ENCODE measurements at regions of chr17 and their contacts with region 1.

Region 1: GRCh38 chr17:74972107-74972972 is at the start of gene HID1:
- DNase-seq: peak; percentile 60 to 79 (median 74)
- ATAC-seq: peak; percentile 93
- H3K4me3 ChIP-seq: peak within 1 kb of the TSS; percentile 58
- H3K4me3 Mint-ChIP-seq: peak within 1 kb of the TSS; percentile 80 to 98 (median 87)
- H3K27ac ChIP-seq: peak within 1 kb of the TSS; percentile 51
- H3K27ac Mint-ChIP-seq: peak within 1 kb of the TSS in 8 of 9 donors; percentile 56 to 86 (median 80)
- H3K4me1 ChIP-seq: peaks cover 4 to 9% of the 10 kb centered on the region in 2 donors
- H3K4me1 Mint-ChIP-seq: peaks cover 5 to 18% (median 7%) of the 10 kb centered on the region in 7 donors
- H3K27me3 ChIP-seq: no peaks in the 10 kb centered on the region
- H3K27me3 Mint-ChIP-seq: peaks cover 0 to 55% (median 7%) of the 10 kb centered on the region in 5 donors
- total RNA-seq, gene HID1: 0.60 to 25.2 (median 14.8) TPM

Region 2: DNA sequence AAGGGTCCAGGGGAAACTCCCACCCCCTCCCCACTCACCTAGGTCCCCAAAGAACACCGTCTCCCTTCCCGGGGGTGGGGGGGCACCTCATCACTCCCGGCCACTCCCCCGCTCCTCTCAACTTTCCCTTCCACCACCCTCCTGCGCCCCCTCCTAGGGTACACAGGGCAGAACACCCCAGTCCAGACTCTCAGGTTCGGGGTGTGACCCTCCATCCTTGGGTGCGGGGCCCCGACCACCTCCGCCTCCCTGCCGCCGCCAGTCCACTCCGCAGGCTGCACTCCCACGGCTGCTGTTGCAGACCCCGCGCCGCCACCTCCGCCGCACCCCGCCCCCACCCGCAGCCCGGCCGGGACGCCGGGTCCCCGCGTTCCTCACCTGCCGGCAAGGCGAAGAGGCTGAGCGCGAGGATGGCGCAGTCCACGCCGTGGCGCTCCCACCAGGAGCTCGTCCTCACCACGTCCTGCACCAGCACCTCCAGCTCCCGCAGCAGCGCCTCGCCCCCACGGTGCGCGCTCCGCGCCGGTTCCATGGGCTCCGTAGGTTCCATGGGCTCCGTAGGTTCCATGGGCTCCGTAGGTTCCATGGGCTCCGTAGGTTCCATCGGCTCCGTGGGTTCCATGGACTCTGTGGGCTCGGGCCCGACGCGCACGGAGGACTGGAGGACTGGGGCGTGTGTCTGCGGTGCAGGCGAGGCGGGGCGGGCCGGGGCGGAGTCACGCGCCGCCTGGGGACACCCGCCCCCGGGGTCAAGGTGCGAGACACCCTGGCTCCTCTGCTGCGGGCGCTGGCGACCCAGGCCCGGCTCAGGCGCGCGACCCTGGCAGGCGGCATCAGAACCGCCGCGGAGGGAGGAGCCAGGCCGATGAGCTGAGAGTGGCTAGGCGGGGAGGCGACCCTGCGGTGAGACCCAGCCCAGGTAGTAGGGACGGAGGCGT is 79.1 kb before region 1 on chr17 and contains the start of gene FADS6:
- CTCF ChIA-PET with region 1: no interaction called
- POLR2A ChIA-PET with region 1: no interaction called
- intact Hi-C with region 1: no loop called
- DNase-seq: peak in 2 of 9 donors; percentile 10
- ATAC-seq: peak; percentile 57
- H3K4me3 ChIP-seq: no peak within 1 kb of the TSS
- H3K4me3 Mint-ChIP-seq: peak within 1 kb of the TSS; percentile 10 to 80 (median 72)
- H3K27ac ChIP-seq: no peak within 1 kb of the TSS
- H3K27ac Mint-ChIP-seq: no peak within 1 kb of the TSS
- H3K4me1 ChIP-seq: no peaks in the 10 kb centered on the region
- H3K4me1 Mint-ChIP-seq: peaks cover 0 to 11% (median 6%) of the 10 kb centered on the region in 7 donors
- H3K27me3 ChIP-seq: peaks cover 0 to 11% of the 10 kb centered on the region in 2 donors
- H3K27me3 Mint-ChIP-seq: peaks cover 30 to 59% (median 37%) of the 10 kb centered on the region in 5 donors
- total RNA-seq, gene FADS6: not detected

Region 3: DNA sequence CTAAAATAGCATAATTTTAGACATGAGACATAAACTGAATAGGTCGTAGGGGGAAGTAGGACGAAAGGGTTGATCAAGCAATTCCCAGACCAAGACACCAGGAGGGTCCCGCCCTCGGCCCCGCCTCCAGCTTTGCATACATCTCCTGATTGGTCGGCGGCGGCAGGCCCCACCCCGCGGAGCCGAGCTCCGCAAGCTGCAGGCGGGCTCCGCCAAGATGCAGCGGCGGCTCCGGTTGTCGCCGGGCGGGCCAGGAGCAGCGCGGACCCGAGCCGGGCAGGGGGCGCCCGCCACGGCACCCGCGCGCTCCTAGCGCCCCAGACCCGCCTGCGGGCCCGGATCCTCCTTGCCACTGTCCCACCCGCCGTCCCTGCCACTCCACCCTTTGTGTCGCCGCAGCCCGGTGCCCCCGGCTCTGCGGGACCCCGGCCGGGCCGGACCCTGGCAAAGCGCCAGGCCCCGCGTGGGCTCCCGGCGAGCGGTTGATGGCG is 15.1 kb after region 1 on chr17 and contains the start of gene CDR2L:
- CTCF ChIA-PET with region 1: interaction called, 4 read pairs
- POLR2A ChIA-PET with region 1: interaction called, 9 read pairs
- intact Hi-C with region 1: loop called (anchors 1 to 2 kb)
- DNase-seq: peak; percentile 87 to 94 (median 90)
- ATAC-seq: peak; percentile 98
- H3K4me3 ChIP-seq: peak within 1 kb of the TSS; percentile 44
- H3K4me3 Mint-ChIP-seq: peak within 1 kb of the TSS; percentile 84 to 94 (median 89)
- H3K27ac ChIP-seq: peak within 1 kb of the TSS; percentile 8
- H3K27ac Mint-ChIP-seq: peak within 1 kb of the TSS in 8 of 9 donors; percentile 10 to 83 (median 66)
- H3K4me1 ChIP-seq: peaks cover 6 to 14% of the 10 kb centered on the region in 2 donors
- H3K4me1 Mint-ChIP-seq: peaks cover 5 to 15% (median 10%) of the 10 kb centered on the region in 7 donors
- H3K27me3 ChIP-seq: no peaks in the 10 kb centered on the region
- H3K27me3 Mint-ChIP-seq: peaks cover 0 to 59% (median 0%) of the 10 kb centered on the region in 5 donors
- total RNA-seq, gene CDR2L: 0.08 to 0.17 (median 0.16) TPM in 3 of 5 experiments, not detected in the others